Esophagus squamous epithelium (tissue), 5 donors: ENCODE measurements at regions of chr2 and their contacts with region 1.

Region 1: DNA sequence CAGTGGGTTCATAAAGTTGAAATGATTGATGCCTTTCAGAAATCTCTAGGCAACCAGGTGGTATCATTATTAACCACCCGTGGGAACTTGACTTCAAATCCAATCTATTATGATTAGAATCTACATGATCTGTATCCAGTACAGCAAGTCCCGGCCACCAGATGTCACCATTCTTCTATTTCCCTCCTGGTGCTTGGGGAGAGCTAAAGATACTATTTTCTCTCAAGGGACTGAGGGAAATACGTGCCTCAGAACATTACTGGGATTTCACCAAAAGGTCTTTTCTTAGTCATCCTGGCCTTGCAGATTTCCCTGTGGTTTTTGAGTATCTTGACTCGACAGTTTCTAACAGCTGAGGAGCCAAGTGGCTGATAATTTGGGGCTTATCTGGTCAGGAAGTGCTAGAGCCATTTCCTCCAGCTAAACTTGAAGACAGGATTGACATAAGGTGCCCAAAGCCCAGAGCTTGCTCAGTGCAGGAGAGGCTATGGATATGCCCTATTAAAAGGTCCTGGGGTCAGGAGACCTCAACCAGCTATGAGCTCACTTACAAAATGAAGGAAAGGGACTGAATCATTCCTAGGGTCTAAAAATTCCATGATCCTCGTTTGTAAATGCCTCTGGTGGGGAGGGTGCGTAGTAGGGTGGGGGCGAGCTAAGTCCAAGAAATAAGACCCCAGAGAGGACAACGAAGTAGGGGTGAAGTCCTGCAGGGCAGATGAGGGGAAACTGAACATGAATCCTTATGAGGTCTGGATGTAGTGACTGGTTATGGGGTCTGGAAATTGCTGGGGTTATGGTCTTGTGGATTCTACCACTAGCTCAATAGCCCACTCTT is 135.4 kb upstream of the MGAT5 start:
- DNase-seq: peak; percentile 42
- H3K4me3 ChIP-seq: peak overlapping the region in 1 of 4 donors; percentile 6
- H3K27ac ChIP-seq: peak overlapping the region in 3 of 4 donors; percentile 21 to 96 (median 92)
- H3K4me1 ChIP-seq: peaks cover 12 to 40% (median 13%) of the 10 kb centered on the region in 3 donors
- H3K27me3 ChIP-seq: peaks cover 0 to 5% (median 0%) of the 10 kb centered on the region in 4 donors
- CTCF ChIP-seq: peak; percentile 76 to 88 (median 79)
- POLR2A ChIP-seq: no peak

Region 2: DNA sequence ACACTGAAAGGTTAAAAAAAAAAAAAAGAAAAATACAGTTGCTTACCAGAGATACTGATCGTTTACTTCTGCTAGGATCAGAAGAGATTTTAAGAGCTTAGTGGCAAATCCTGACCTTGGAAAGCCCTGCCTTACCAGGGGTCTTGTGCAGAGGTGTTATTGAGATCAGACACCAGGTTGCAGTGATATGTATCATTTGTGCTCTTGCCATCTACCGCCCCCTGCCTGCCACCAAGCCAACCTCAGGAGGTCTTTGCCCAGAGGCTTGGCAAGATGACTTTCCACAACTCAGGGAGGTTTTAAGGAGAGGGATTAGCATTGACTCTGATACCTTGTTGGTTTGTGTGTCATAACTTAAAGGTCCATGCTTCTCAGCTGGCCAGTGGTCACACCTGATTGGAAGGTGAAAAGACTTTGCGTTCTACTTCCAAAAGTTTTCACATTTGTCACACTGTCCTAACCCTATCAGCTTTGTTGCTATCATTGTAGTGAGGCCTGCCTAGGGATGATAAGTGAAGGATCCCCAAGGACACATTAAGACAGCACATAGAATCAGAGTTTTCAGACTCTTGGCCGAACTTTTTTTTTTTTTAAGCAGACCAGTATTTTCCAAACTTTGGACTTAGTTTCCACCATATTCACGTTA is 89.2 kb after region 1 on chr2:
- intact Hi-C with region 1: loop called (anchors 10 kb)
- DNase-seq: no peak
- H3K4me3 ChIP-seq: no peak overlapping the region
- H3K27ac ChIP-seq: no peak overlapping the region
- H3K4me1 ChIP-seq: peaks cover 0 to 49% (median 4%) of the 10 kb centered on the region in 3 donors
- H3K27me3 ChIP-seq: no peaks in the 10 kb centered on the region
- CTCF ChIP-seq: peak; percentile 41 to 75 (median 62)
- POLR2A ChIP-seq: no peak

Region 3: GRCh38 chr2:134324947-134325346 is 206.4 kb after region 1 on chr2:
- intact Hi-C with region 1: no loop called
- DNase-seq: no peak
- H3K4me3 ChIP-seq: no peak overlapping the region
- H3K27ac ChIP-seq: no peak overlapping the region
- H3K4me1 ChIP-seq: peaks cover 0 to 39% (median 15%) of the 10 kb centered on the region in 3 donors
- H3K27me3 ChIP-seq: no peaks in the 10 kb centered on the region
- CTCF ChIP-seq: no peak
- POLR2A ChIP-seq: no peak

Region 4: DNA sequence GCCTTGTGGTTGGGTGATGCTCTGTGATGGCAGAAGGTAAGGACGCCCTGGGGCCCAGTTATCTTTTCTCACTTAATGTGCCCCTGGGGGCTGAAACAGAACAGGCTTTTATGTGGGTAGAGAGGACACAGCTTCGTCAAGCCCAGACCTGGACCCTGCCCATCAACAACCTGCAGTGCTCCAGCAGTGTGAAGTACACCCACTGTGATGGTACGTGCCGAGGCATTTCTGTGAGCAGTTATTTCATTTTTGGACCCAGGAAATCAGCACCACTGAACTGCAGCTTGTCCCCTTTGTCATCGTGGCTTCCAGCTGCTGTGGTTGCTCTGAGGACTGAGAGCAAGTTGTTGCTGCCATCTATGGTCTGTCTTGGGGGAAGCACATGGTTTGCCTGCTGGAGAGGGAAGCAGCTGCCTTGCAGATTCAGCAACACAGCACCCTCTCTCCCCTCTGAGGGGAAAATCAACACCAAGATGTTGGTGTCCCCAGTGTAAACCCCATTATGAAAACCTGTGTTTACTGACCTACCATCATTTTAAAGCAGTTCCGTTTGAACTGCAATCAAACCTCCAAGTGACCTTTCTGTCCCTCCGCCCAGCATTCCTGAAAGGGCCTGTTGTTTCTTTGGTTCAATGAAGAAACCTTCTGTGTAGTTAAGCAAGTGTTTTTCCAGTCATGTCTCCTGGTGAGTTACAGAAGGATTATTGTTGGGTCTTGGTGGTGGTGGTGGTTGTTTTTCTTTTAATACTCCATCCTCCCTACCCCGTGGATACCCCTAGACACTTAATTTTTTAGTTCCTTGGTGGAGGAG is 293.5 kb after region 1 on chr2:
- intact Hi-C with region 1: loop called (anchors 10 kb)
- DNase-seq: peak; percentile 44
- H3K4me3 ChIP-seq: no peak overlapping the region
- H3K27ac ChIP-seq: no peak overlapping the region
- H3K4me1 ChIP-seq: peaks cover 6 to 50% (median 24%) of the 10 kb centered on the region in 3 donors
- H3K27me3 ChIP-seq: no peaks in the 10 kb centered on the region
- CTCF ChIP-seq: peak in 5 of 6 experiments; percentile 47 to 69 (median 53)
- POLR2A ChIP-seq: no peak